Activated CD8-positive, alpha-beta T cell treated with anti-CD3 and anti-CD28 coated beads, Interleukin-2, amount 10 ng/mL, durations not matched to agents 7 days and 5 days (primary cell): ENCODE measurements at regions of chr5 and their contacts with region 1.

Region 1: DNA sequence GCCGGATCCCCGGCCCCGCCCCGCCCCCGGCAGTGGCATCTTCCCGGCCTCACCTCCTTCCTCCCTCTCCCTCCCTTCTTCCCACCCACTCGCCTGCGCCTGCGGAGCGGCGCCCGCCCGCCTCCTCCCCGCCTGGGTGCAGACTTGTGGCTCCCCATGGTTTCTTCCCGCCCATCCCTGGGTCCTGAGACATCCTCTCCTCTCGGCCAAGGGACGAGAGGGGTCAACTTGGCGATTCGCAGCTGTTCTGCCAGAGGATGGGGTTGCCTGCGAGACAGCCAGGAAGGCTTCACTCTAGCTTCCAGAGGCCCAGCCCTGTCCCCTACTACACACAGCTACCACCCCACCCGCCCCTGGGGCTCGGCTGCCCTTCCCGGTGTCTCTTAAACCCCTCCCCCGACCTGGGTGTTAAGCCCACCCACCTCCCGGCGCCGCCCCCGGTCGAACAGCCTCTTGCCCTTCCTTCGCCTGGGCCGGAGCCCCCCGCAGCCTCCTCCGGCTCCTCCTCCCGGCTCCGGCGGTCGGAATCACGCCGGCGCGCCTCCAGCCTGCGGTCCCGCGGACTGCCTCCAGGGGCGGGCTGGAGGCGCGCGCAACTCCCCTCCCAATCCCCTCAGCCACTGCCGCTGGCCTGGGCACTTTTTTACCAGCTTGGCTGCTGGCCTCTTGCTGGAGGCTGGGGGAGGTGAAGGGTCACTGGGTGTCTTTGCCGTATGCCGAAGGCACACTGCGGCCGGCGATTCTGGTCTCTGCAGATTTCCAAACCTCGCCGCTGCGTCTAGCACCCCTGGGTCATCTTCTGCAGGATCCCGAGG is 1.9 kb downstream of the JADE2 start:
- DNase-seq: peak; percentile 83
- ATAC-seq: peak; percentile 60
- H3K4me3 Mint-ChIP-seq: peak overlapping the region; percentile 88
- H3K27ac Mint-ChIP-seq: peak overlapping the region; percentile 93
- H3K4me1 Mint-ChIP-seq: peaks cover 36% of the 10 kb centered on the region
- H3K27me3 Mint-ChIP-seq: peaks cover under 1% of the 10 kb centered on the region

Region 2: DNA sequence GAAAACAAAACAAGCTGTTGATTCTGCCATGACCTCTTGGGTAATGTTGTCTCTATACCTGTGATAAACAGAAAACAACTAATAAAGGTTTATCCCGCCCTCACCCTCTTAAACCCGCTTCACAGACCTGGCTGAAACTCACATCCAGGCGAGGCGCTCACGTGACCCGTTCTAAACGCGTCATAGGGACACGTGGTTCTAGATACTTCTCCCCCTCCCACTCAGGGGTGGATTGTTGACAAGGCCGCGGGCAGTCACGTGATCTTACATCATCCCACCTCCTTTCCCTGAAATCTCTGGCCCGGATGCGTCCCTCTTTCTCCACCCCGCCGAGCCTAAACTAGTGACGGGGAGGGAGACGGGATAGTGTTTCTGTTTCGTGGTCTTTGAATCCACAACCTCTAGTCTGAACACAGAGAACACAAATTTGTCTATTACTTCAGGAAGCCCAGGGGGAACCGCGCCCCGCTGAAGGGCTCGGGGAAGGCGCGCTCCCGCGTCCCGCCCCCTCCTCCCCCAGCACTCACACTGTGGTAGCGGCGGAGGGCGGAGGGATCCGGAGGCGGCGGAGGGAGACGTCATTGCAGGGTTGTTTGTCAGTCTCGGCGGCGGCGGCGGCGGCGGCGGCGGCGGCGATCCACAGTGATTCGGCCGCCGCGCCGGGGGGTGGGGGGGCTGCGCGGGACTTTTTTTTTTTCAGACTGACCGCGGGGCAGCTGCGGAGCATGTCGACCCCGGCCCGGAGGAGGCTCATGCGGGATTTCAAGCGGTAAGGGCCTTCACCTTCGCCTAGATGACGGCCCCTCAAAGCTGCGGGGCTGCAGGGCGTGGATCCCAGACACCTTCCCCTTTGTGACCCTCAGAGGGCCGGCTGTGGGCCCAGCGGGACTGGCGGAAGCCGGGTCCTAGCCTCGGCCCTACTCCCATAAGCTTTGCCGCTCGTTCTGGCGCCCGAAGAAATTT is 156.2 kb before region 1 on chr5 and contains the start of gene UBE2B:
- CTCF ChIA-PET with region 1: interaction called, 4 read pairs
- POLR2A ChIA-PET with region 1: interaction called, 38 read pairs
- DNase-seq: peak; percentile 99
- ATAC-seq: peak; percentile 73
- H3K4me3 Mint-ChIP-seq: peak within 1 kb of the TSS; percentile 99
- H3K27ac Mint-ChIP-seq: peak within 1 kb of the TSS; percentile 100
- H3K4me1 Mint-ChIP-seq: peaks cover 46% of the 10 kb centered on the region
- H3K27me3 Mint-ChIP-seq: no peaks in the 10 kb centered on the region
- total RNA-seq, gene UBE2B: 83.0 to 87.6 TPM

Region 3: GRCh38 chr5:134465816-134466240 is 61.5 kb before region 1 on chr5:
- CTCF ChIA-PET with region 1: interaction called, 4 read pairs
- POLR2A ChIA-PET with region 1: interaction called, 31 read pairs
- DNase-seq: peak; percentile 59
- ATAC-seq: peak; percentile 85
- H3K4me3 Mint-ChIP-seq: peak overlapping the region; percentile 76
- H3K27ac Mint-ChIP-seq: peak overlapping the region; percentile 80
- H3K4me1 Mint-ChIP-seq: peaks cover 22% of the 10 kb centered on the region
- H3K27me3 Mint-ChIP-seq: peaks cover 4% of the 10 kb centered on the region

Region 4: DNA sequence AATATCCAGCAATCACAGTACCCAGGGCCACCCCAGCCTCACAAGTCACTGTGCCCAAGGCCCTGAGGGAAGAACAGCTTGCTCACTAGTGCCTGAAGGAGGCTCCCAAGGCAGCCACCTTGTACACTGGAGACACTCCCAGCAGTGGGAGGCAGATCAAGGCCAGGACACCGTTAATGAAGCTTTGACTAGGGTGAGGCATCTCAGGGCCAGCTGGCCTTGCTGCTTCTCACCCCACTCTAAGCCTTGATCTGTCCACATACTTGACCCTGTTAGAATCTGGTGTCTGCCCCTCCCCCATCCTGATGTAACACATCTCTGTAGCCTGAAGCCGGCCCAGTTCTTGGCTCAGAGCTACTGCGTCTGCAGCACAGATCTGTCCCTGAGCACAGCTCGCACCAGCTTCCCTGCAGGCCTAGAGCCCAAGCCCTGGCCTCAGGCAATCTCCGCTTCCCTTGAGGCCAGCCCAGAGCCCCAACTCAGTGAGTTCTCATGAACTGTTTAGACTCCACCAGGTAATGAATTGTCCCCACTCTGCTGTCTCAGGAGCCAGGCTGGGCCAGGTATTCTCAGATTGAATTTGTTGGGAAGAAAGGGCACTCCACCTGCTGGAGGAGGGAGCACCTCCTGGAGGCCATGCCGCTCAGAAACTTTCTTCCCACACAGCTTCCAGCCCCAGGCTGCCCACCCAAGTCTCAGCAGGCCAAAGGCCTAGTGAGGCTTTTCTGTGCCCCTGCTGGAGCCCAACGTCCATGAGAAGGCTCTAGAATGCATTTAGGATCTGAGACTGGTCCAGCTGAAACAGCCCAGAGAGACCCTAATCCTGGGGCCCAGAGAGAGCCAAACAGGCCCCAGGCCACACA is 15.3 kb before region 1 on chr5:
- CTCF ChIA-PET with region 1: interaction called, 5 read pairs
- POLR2A ChIA-PET with region 1: interaction called, 11 read pairs
- DNase-seq: no peak
- ATAC-seq: no peak
- H3K4me3 Mint-ChIP-seq: no peak overlapping the region
- H3K27ac Mint-ChIP-seq: no peak overlapping the region
- H3K4me1 Mint-ChIP-seq: peaks cover 20% of the 10 kb centered on the region
- H3K27me3 Mint-ChIP-seq: no peaks in the 10 kb centered on the region

Region 5: DNA sequence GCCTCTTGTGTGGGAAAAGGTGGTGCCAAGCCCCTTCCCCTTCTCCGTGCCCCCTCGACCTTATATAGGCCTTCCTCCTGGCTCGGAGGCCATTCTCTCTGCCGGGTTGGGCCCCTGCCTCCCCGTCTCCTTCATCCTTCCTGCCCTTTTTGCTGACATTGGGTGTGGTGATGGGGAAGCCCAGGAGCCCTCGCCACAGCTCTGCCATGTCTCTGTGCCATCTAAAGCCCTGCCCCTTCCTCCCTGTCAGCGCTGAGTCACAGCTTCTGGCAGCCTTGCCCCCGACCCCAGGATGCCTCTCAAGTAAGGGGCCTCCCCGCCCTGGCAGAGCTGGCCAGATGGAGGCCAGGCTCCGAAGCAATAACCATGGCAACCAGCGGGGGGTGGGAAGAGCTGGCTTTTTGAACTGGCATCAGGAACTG is 28.5 kb after region 1 on chr5:
- CTCF ChIA-PET with region 1: interaction called, 19 read pairs
- POLR2A ChIA-PET with region 1: interaction called, 5 read pairs
- DNase-seq: peak; percentile 83
- ATAC-seq: peak; percentile 88
- H3K4me3 Mint-ChIP-seq: peak overlapping the region; percentile 17
- H3K27ac Mint-ChIP-seq: peak overlapping the region; percentile 89
- H3K4me1 Mint-ChIP-seq: peaks cover 28% of the 10 kb centered on the region
- H3K27me3 Mint-ChIP-seq: no peaks in the 10 kb centered on the region